H1 (cell line): ENCODE measurements at regions of chr7 and their contacts with region 1.

Region 1: GRCh38 chr7:158407581-158408317 is 179.9 kb downstream of the PTPRN2 start:
- DNase-seq: no peak
- H3K4me3 ChIP-seq: no peak overlapping the region
- H3K27ac ChIP-seq: no peak overlapping the region
- H3K4me1 ChIP-seq: no peaks in the 10 kb centered on the region; a peak in 1 of 7 replicates
- H3K27me3 ChIP-seq: no peaks in the 10 kb centered on the region
- CTCF ChIP-seq: peak in 2 of 3 experiments; percentile 61 to 66; a peak in 3 of 4 replicates
- EP300 ChIP-seq: no peak
- POLR2A ChIP-seq: no peak
- RAD21 ChIP-seq: peak; percentile 80 to 84

Region 2: DNA sequence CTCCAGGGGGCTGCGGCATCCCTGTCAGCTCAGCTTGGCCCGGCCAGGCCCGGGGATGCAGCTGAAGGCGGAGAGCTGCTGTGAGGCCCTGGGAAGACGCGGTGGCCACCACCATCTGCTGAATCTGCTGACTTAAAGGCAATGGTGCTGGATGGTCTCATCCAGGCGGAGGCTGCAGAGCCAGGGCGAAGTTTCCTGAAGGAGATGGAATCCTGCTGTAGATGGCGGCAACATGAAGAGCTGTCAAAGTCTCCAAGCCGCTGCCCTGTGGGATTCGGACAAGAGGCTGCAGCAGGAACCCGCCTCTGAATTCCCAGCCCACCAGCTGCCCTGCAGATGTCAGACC is 20.2 kb before region 1 on chr7:
- CTCF ChIA-PET with region 1: interaction called, 10 read pairs
- POLR2A ChIA-PET with region 1: no interaction called
- DNase-seq: no peak
- H3K4me3 ChIP-seq: no peak overlapping the region
- H3K27ac ChIP-seq: no peak overlapping the region
- H3K4me1 ChIP-seq: peaks cover 0 to 16% (median 8%) of the 10 kb centered on the region in 4 experiments; a peak in 6 of 7 replicates
- H3K27me3 ChIP-seq: no peaks in the 10 kb centered on the region; a peak in 2 of 7 replicates
- CTCF ChIP-seq: no peak
- EP300 ChIP-seq: no peak
- POLR2A ChIP-seq: no peak
- RAD21 ChIP-seq: no peak

Region 3: GRCh38 chr7:158395780-158396278 is 11.9 kb before region 1 on chr7:
- CTCF ChIA-PET with region 1: interaction called, 51 read pairs
- POLR2A ChIA-PET with region 1: no interaction called
- DNase-seq: peak; percentile 36 to 78
- H3K4me3 ChIP-seq: no peak overlapping the region
- H3K27ac ChIP-seq: no peak overlapping the region
- H3K4me1 ChIP-seq: peaks cover 0 to 12% (median 7%) of the 10 kb centered on the region in 4 experiments; a peak in 4 of 7 replicates
- H3K27me3 ChIP-seq: no peaks in the 10 kb centered on the region
- CTCF ChIP-seq: peak; percentile 41 to 67 (median 65)
- EP300 ChIP-seq: no peak
- POLR2A ChIP-seq: no peak
- RAD21 ChIP-seq: peak; percentile 73 to 82

Region 4: GRCh38 chr7:158419238-158419785 is 11.6 kb after region 1 on chr7:
- CTCF ChIA-PET with region 1: interaction called, 12 read pairs
- POLR2A ChIA-PET with region 1: no interaction called
- DNase-seq: no peak
- H3K4me3 ChIP-seq: no peak overlapping the region
- H3K27ac ChIP-seq: no peak overlapping the region
- H3K4me1 ChIP-seq: peaks cover 0 to 4% (median 0%) of the 10 kb centered on the region in 4 experiments; a peak in 2 of 7 replicates
- H3K27me3 ChIP-seq: no peaks in the 10 kb centered on the region
- CTCF ChIP-seq: no peak
- EP300 ChIP-seq: no peak
- POLR2A ChIP-seq: no peak
- RAD21 ChIP-seq: no peak